ENCODE measurements at regions of chr5 and their contacts with region 1.

Region 1: GRCh38 chr5:95022967-95023695 is 261.8 kb downstream of the MCTP1 start:
- DNase-seq: no peak
- ATAC-seq: no peak
- H3K4me3 ChIP-seq: no peak overlapping the region
- H3K27ac ChIP-seq: no peak overlapping the region
- H3K4me1 ChIP-seq: peaks cover 0 to 31% (median 11%) of the 10 kb centered on the region in 9 donors
- H3K27me3 ChIP-seq: no peaks in the 10 kb centered on the region
- CTCF ChIP-seq: no peak

Region 2: GRCh38 chr5:95583992-95584391 is 560.9 kb after region 1 on chr5:
- intact Hi-C with region 1: loop called in 1 of 10 experiments (anchors 5 kb)
- DNase-seq: no peak
- ATAC-seq: no peak
- H3K4me3 ChIP-seq: no peak overlapping the region
- H3K27ac ChIP-seq: no peak overlapping the region
- H3K4me1 ChIP-seq: no peaks in the 10 kb centered on the region
- H3K27me3 ChIP-seq: no peaks in the 10 kb centered on the region
- CTCF ChIP-seq: no peak

Region 3: GRCh38 chr5:96259151-96259772 is 1236.1 kb after region 1 on chr5:
- intact Hi-C with region 1: no loop called
- DNase-seq: no peak
- ATAC-seq: peak in 7 of 8 donors; percentile 40 to 87 (median 66)
- H3K4me3 ChIP-seq: no peak overlapping the region
- H3K27ac ChIP-seq: peak overlapping the region in 5 of 10 donors; percentile 9 to 60 (median 17)
- H3K4me1 ChIP-seq: peaks cover 0 to 30% (median 10%) of the 10 kb centered on the region in 9 donors
- H3K27me3 ChIP-seq: no peaks in the 10 kb centered on the region
- CTCF ChIP-seq: no peak

Measured in heart right ventricle (tissue), 16 donors.